Caco-2 (cell line): ENCODE measurements at regions of chrX and their contacts with region 1.

Region 1: GRCh38 chrX:41796577-41796976 is 72.6 kb downstream of the GPR82 start:
- DNase-seq: no peak
- H3K4me3 ChIP-seq: no peak overlapping the region
- H3K4me3 Mint-ChIP-seq: no peak overlapping the region
- H3K27ac Mint-ChIP-seq: no peak overlapping the region
- H3K4me1 ChIP-seq: no peaks in the 10 kb centered on the region
- H3K4me1 Mint-ChIP-seq: peaks cover 12% of the 10 kb centered on the region
- H3K27me3 ChIP-seq: no peaks in the 10 kb centered on the region
- H3K27me3 Mint-ChIP-seq: no peaks in the 10 kb centered on the region
- CTCF ChIP-seq: no peak

Region 2: DNA sequence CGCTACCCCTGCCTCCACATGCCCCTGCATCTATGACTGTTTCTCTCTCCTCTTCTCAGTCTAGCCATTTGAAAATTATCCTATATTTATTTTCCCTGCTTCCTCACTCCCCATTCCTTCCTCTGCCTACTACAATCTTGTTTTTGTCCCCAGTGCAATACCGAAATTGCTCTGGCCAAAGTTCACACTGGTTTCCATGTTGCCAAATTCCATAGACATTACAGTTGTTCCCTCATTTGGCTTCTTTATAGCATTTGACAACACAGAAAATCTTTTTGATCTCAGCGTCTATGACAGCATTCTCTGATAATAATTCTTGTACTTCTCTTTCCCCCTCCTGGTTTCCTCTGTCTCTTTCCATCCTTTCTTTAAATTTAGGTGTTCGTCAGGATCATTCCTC is 26.8 kb after region 1 on chrX:
- CTCF ChIA-PET with region 1: no interaction called
- POLR2A ChIA-PET with region 1: interaction called, 5 read pairs
- intact Hi-C with region 1: loop called (anchors 2 kb)
- DNase-seq: peak; percentile 48 to 53
- H3K4me3 ChIP-seq: no peak overlapping the region
- H3K4me3 Mint-ChIP-seq: peak overlapping the region; percentile 64
- H3K27ac Mint-ChIP-seq: peak overlapping the region; percentile 82
- H3K4me1 ChIP-seq: peaks cover 29% of the 10 kb centered on the region
- H3K4me1 Mint-ChIP-seq: peaks cover 30% of the 10 kb centered on the region
- H3K27me3 ChIP-seq: no peaks in the 10 kb centered on the region
- H3K27me3 Mint-ChIP-seq: no peaks in the 10 kb centered on the region
- CTCF ChIP-seq: no peak

Region 3: DNA sequence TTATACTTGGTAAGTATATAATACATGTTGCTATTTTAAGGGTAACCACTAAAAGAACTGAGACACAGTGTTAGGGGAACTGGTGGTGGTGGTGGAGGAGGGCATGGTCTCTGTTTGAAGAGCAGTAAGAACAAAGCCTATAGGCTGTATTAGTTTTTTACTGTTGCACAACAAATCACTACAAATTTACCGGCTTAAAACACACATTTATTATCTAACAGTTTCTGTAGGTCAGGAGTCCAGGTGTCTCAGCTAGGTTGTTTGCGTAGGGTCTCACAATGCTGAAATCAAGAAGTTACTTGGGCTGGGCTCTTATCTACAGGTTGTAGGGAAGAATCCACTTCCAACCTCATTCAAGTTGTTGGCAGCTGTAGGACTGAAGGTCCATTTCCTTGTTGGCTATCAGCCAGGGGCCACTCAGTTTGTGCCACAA is 74.2 kb after region 1 on chrX:
- CTCF ChIA-PET with region 1: no interaction called
- POLR2A ChIA-PET with region 1: interaction called, 12 read pairs
- intact Hi-C with region 1: no loop called
- DNase-seq: peak; percentile 33 to 61
- H3K4me3 ChIP-seq: no peak overlapping the region
- H3K4me3 Mint-ChIP-seq: no peak overlapping the region
- H3K27ac Mint-ChIP-seq: no peak overlapping the region
- H3K4me1 ChIP-seq: peaks cover 17% of the 10 kb centered on the region
- H3K4me1 Mint-ChIP-seq: peaks cover 9% of the 10 kb centered on the region
- H3K27me3 ChIP-seq: no peaks in the 10 kb centered on the region
- H3K27me3 Mint-ChIP-seq: no peaks in the 10 kb centered on the region
- CTCF ChIP-seq: no peak